ENCODE measurements at regions of chr6 and their contacts with region 1.

Region 1: DNA sequence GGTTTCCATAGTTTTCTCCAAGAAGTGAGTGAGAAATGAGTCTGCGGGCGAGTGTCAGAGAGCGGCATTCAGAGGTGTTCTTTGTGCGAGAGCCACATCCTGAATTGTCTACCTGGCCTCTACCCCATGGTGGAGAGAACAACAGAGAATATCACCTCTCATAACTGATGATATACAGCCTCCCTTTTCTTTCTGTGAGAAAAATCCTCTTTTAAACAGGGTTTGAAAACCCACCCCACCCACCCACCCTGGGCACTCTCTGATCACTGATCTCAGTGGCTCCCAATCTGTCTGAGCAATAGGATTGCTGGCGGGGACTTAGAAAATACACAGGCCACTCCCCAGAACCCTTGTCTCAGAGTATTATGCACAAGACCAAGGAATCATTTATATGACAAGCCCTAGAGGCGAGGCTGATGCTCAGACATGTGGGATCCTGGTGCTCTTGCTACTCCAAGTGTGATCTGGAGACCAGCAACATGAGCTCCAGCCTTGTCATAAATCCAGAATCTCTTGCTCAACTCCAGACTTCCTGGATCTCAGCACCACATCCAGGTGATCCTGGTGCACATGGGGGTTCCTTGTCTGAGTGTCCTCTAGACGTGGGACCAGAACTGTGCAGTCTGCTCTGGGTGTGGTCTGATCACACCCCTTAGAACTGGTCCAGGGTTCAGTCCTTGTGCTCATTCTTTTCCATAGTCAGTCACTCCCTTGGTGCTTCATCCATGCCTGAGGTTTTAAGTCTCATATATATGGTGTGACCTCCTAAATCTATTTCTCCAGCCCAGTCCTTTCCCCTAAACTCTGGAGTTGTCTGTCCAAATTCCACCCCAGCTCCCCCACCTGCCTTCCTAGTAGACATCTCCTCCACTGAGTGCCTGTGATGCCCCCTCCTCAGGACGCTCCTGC is 5.3 kb downstream of the HLA-B start:
- DNase-seq: peak in 5 of 9 experiments; percentile 33 to 84 (median 50)
- ATAC-seq: peak; percentile 44
- H3K4me3 ChIP-seq: no peak overlapping the region
- H3K4me3 Mint-ChIP-seq: peak overlapping the region; percentile 100
- H3K27ac ChIP-seq: peak overlapping the region; percentile 41 to 42
- H3K27ac Mint-ChIP-seq: peak overlapping the region; percentile 81
- H3K4me1 ChIP-seq: peaks cover 40% of the 10 kb centered on the region
- H3K4me1 Mint-ChIP-seq: peaks cover 56% of the 10 kb centered on the region
- H3K27me3 ChIP-seq: no peaks in the 10 kb centered on the region
- H3K27me3 Mint-ChIP-seq: no peaks in the 10 kb centered on the region
- CTCF ChIP-seq: no peak

Region 2: GRCh38 chr6:31265926-31266325 is 85.7 kb before region 1 on chr6:
- CTCF ChIA-PET with region 1: no interaction called
- POLR2A ChIA-PET with region 1: interaction called, 37 read pairs
- intact Hi-C with region 1: loop called (anchors 1 kb)
- DNase-seq: no peak
- ATAC-seq: no peak
- H3K4me3 ChIP-seq: no peak overlapping the region
- H3K4me3 Mint-ChIP-seq: no peak overlapping the region
- H3K27ac ChIP-seq: no peak overlapping the region
- H3K27ac Mint-ChIP-seq: peak overlapping the region; percentile 69
- H3K4me1 ChIP-seq: peaks cover 31% of the 10 kb centered on the region
- H3K4me1 Mint-ChIP-seq: peaks cover 49% of the 10 kb centered on the region
- H3K27me3 ChIP-seq: no peaks in the 10 kb centered on the region
- H3K27me3 Mint-ChIP-seq: no peaks in the 10 kb centered on the region
- CTCF ChIP-seq: no peak

Region 3: GRCh38 chr6:31308050-31308844 is 43.4 kb before region 1 on chr6:
- CTCF ChIA-PET with region 1: no interaction called
- POLR2A ChIA-PET with region 1: interaction called, 11 read pairs
- intact Hi-C with region 1: no loop called
- DNase-seq: peak; percentile 48 to 86 (median 69)
- ATAC-seq: peak; percentile 95
- H3K4me3 ChIP-seq: peak overlapping the region; percentile 64 to 74
- H3K4me3 Mint-ChIP-seq: peak overlapping the region; percentile 85
- H3K27ac ChIP-seq: peak overlapping the region in 1 of 2 experiments; percentile 27
- H3K27ac Mint-ChIP-seq: peak overlapping the region; percentile 77
- H3K4me1 ChIP-seq: peaks cover 9% of the 10 kb centered on the region
- H3K4me1 Mint-ChIP-seq: peaks cover 7% of the 10 kb centered on the region
- H3K27me3 ChIP-seq: no peaks in the 10 kb centered on the region
- H3K27me3 Mint-ChIP-seq: no peaks in the 10 kb centered on the region
- CTCF ChIP-seq: no peak

Region 4: DNA sequence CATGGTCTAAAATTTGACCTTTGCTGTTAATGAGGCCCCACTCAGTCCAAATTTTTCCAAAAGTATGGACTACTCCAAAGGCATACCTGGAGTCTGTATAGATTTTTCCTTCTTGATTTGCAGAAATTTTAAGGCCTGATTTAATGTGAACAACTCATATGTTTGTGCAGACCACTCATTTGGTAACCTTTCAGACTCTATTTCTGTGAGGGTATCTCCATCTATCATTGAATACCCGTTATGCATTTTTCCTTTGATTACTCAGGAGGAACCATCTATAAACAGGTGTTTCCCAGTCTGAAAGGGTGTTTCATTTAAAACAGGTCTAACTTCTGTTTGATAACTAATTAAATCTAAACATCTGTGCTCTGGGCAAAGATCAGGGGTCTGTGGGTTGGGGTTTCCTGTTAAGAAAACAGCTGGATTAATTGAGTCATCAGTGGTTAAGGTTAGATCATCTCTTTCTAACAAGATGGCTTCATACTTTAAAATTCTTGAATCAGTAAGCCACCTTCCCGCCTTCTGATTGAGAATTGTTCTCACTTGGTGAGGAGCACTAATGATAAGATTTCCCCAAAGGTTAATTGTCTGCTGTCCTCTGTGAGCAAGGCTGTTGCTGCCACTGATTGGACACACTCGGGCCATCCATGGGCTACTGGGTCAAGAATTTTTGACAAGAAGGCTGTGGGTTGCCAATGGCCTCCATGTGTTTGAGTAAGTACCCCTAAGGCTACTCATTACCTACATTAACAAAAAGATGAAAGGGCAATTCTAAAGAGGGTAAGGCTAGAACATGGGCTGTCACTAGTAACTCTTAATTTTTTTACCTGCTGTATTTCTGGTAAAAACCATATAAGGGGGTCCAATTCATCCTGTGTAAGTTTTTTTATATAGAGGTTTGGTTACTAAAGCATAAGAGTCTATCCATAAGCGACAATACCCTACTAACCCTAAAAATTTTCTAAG is 18.7 kb before region 1 on chr6:
- CTCF ChIA-PET with region 1: no interaction called
- POLR2A ChIA-PET with region 1: interaction called, 6 read pairs
- intact Hi-C with region 1: loop called in 1 of 2 experiments (anchors 2 kb)
- DNase-seq: peak in 5 of 9 experiments; percentile 25 to 82 (median 62)
- ATAC-seq: peak; percentile 82
- H3K4me3 ChIP-seq: no peak overlapping the region
- H3K4me3 Mint-ChIP-seq: no peak overlapping the region
- H3K27ac ChIP-seq: no peak overlapping the region
- H3K27ac Mint-ChIP-seq: peak overlapping the region; percentile 14
- H3K4me1 ChIP-seq: no peaks in the 10 kb centered on the region
- H3K4me1 Mint-ChIP-seq: peaks cover 13% of the 10 kb centered on the region
- H3K27me3 ChIP-seq: no peaks in the 10 kb centered on the region
- H3K27me3 Mint-ChIP-seq: no peaks in the 10 kb centered on the region
- CTCF ChIP-seq: no peak

Region 5: GRCh38 chr6:31697555-31697954 is 345.9 kb after region 1 on chr6:
- CTCF ChIA-PET with region 1: no interaction called
- POLR2A ChIA-PET with region 1: no interaction called
- intact Hi-C with region 1: no loop called
- DNase-seq: no peak
- ATAC-seq: no peak
- H3K4me3 ChIP-seq: no peak overlapping the region
- H3K4me3 Mint-ChIP-seq: no peak overlapping the region
- H3K27ac ChIP-seq: peak overlapping the region in 1 of 2 experiments; percentile 18
- H3K27ac Mint-ChIP-seq: peak overlapping the region; percentile 70
- H3K4me1 ChIP-seq: peaks cover 17% of the 10 kb centered on the region
- H3K4me1 Mint-ChIP-seq: peaks cover 35% of the 10 kb centered on the region
- H3K27me3 ChIP-seq: no peaks in the 10 kb centered on the region
- H3K27me3 Mint-ChIP-seq: no peaks in the 10 kb centered on the region
- CTCF ChIP-seq: no peak

Region 6: DNA sequence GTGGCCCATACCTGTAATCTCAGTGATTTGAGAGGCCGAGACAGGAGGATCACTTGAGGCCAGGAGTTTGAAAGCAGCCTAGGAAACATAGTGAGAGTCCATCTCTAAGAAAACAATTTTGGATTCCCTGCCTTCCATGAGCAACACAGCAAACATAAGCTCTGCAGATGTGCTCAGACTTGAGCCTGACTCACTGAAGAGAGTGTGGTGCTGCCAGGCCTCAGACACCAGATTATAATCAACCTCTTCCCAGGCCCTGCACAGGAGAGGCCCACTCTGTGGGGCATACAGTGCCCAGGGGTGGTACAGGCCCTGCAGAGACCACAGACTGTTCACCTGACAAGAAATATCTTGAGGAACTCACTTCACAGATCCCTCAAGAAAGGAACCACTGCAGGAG is 1744.0 kb after region 1 on chr6:
- CTCF ChIA-PET with region 1: no interaction called
- POLR2A ChIA-PET with region 1: no interaction called
- intact Hi-C with region 1: no loop called
- DNase-seq: no peak
- ATAC-seq: no peak
- H3K4me3 ChIP-seq: no peak overlapping the region
- H3K4me3 Mint-ChIP-seq: no peak overlapping the region
- H3K27ac ChIP-seq: no peak overlapping the region
- H3K27ac Mint-ChIP-seq: no peak overlapping the region
- H3K4me1 ChIP-seq: peaks cover 7% of the 10 kb centered on the region
- H3K4me1 Mint-ChIP-seq: peaks cover 3% of the 10 kb centered on the region
- H3K27me3 ChIP-seq: no peaks in the 10 kb centered on the region
- H3K27me3 Mint-ChIP-seq: peaks cover 19% of the 10 kb centered on the region
- CTCF ChIP-seq: no peak